Ovary (tissue), 10 donors: ENCODE measurements at regions of chr16 and their contacts with region 1.

Region 1: DNA sequence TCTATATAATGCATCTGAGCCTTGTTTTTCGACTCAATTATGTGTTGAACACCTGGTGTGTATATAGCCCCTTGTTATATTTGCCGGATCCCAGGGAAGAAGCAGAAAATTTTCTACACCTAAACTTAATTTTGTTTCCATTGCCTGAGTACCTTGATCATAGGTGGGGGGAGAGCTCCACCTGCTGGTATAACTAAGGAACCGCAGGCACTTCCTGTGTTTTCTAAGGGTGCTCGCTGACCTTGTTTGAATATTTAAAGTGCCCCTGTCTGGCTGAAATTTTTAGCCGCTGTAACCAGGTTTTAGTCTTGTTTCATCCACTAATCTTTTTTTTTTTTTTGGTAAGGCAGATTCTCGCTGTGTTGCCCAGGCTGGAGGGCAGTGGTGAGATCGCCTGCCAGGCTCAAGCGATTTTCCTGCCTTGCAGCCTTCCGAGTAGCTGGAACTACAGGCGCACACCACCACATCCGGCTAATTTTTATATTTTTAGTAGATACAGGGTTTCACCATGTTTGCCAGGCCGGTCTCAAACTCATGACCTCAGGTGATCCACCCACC is 6.5 kb upstream of the NUBP1 start:
- DNase-seq: peak; percentile 60 to 78 (median 63)
- H3K4me3 ChIP-seq: no peak overlapping the region
- H3K27ac ChIP-seq: peak overlapping the region in 1 of 2 donors; percentile 5
- H3K4me1 ChIP-seq: peaks cover 1% of the 10 kb centered on the region
- H3K27me3 ChIP-seq: no peaks in the 10 kb centered on the region
- CTCF ChIP-seq: peak; percentile 86 to 92 (median 92)
- EP300 ChIP-seq: no peak
- POLR2A ChIP-seq: no peak

Region 2: DNA sequence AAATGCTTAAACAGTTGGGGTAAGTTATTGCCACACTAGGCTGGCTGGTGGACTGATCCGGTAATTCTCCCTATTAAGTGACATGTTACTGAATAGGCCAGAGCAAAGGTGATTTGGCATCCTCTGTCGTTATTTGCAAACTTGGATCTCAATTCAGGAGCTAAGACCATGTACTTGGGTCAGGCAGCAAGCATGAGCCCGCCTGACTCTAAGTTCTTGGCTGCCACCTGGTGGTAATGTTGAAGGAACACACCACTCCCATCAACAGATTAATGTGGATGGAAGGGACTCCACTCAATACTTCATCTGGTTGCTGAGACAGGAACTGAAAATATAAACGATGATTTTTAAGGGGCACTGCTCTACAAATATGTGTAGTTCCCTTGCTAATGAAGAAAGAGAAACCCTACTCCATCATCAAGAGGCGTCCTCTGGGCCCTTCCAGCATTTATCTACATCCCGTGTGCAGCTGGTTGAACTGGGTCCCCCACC is 227.6 kb before region 1 on chr16:
- intact Hi-C with region 1: loop called in 2 of 4 experiments (anchors 2 to 5 kb)
- DNase-seq: peak in 4 of 5 donors; percentile 49 to 60 (median 54)
- H3K4me3 ChIP-seq: no peak overlapping the region
- H3K27ac ChIP-seq: no peak overlapping the region
- H3K4me1 ChIP-seq: no peaks in the 10 kb centered on the region
- H3K27me3 ChIP-seq: no peaks in the 10 kb centered on the region
- CTCF ChIP-seq: peak; percentile 64 to 76 (median 65)
- EP300 ChIP-seq: no peak
- POLR2A ChIP-seq: no peak

Region 3: GRCh38 chr16:10521681-10522274 is 215.4 kb before region 1 on chr16:
- intact Hi-C with region 1: loop called in 3 of 4 experiments (anchors 2 to 5 kb)
- DNase-seq: peak in 4 of 5 donors; percentile 47 to 74 (median 63)
- H3K4me3 ChIP-seq: no peak overlapping the region
- H3K27ac ChIP-seq: no peak overlapping the region
- H3K4me1 ChIP-seq: peaks cover 1% of the 10 kb centered on the region
- H3K27me3 ChIP-seq: no peaks in the 10 kb centered on the region
- CTCF ChIP-seq: peak in 2 of 3 donors; percentile 70 to 73
- EP300 ChIP-seq: no peak
- POLR2A ChIP-seq: no peak

Region 4: DNA sequence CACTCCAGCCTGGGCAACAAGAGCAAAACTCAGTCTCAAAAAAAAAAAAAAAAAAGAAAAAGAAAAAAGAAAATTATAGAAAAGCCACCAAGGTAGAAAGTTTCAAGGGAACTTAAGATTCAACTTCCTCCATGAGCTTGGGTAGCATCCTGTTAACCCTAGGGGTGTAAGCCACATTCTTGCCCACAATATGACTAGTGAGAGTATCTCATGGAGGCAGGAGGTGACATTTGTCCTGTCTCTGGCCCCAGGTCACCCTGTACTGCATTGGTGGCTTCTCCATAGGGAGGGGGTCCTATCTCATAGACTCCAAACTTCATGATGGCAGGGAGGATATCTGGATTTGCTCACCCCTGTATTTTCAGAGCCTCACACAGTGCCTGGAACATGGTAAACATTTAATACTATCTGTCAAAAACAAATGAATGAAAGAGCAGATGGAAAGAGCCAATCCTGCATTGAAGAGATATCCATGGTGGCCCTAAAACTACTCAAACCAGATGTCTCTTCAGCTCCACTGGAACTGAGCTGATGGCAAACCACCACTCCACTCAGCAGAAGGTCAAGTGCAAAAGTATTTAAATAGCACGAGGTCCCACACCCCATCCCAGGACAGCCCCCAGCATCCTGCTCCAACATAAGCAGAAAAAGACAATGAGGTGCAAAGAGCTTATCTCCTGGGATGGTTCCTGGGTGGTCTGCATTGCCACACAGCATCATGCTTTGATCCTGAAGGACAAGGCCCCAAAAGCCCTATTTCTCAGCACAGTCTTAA is 207.1 kb before region 1 on chr16:
- intact Hi-C with region 1: loop called in 1 of 4 experiments (anchors 5 kb)
- DNase-seq: no peak
- H3K4me3 ChIP-seq: no peak overlapping the region
- H3K27ac ChIP-seq: no peak overlapping the region
- H3K4me1 ChIP-seq: no peaks in the 10 kb centered on the region
- H3K27me3 ChIP-seq: no peaks in the 10 kb centered on the region
- CTCF ChIP-seq: no peak
- EP300 ChIP-seq: no peak
- POLR2A ChIP-seq: no peak

Region 5: DNA sequence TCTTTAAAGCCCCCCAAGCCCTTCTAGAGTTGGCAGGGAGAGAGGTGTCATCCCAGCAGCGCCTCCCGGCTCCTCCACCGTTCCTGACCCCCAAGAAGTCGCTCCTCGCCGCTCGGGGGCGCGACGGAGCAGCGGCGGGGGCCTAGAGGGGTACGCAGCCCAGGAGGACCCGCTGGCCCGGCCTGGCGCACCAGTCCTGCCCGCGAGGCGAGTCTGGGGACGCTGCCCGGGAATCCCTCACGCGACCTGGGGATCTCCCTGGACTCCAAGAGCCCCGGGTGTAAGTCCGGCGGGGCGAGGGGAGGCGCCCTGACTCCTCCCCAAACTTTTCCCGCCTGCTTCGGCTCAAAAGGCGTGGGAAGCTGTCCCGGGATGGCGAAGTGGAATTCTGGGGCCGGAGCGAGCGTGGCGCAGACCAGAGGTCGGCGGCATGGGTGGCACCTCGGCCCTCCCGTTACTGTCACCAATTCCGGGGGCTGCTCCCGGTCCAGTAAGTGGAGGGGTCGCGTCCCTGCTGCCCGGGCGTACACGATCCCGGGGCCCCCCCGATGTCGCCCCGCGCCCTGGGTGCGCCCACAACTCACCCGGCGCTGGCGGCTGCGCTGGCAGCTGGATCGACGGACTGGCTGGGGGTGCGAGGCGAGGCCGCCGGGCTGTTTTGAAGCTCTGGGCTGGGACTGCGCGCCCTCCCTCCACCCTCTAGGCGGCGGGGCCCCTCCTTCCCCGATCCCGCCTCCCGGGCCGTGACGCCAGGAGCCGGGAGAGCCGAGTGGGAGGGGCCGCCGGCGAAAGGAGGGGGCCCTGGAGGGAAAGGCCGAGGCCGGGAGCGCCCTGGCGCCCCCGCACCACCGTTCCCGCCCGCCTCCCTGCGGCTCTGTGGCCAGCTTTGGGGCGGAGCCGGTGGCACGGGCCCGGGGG is 156.9 kb before region 1 on chr16 and contains the start of gene EMP2:
- intact Hi-C with region 1: loop called in 1 of 4 experiments (anchors 5 kb)
- DNase-seq: peak; percentile 88 to 92 (median 91)
- H3K4me3 ChIP-seq: peak within 1 kb of the TSS; percentile 84
- H3K27ac ChIP-seq: peak within 1 kb of the TSS; percentile 94 to 99
- H3K4me1 ChIP-seq: peaks cover 24% of the 10 kb centered on the region
- H3K27me3 ChIP-seq: no peaks in the 10 kb centered on the region
- CTCF ChIP-seq: peak; percentile 50 to 83 (median 83)
- EP300 ChIP-seq: no peak
- POLR2A ChIP-seq: peak; percentile 86
- total RNA-seq, gene EMP2: 38.9 to 97.7 (median 83.0) TPM

Region 6: GRCh38 chr16:11056090-11056992 is 319.2 kb after region 1 on chr16:
- intact Hi-C with region 1: no loop called
- DNase-seq: peak in 1 of 5 donors; percentile 13
- H3K4me3 ChIP-seq: no peak overlapping the region
- H3K27ac ChIP-seq: peak overlapping the region in 1 of 2 donors; percentile 31
- H3K4me1 ChIP-seq: peaks cover 10% of the 10 kb centered on the region
- H3K27me3 ChIP-seq: no peaks in the 10 kb centered on the region
- CTCF ChIP-seq: no peak
- EP300 ChIP-seq: no peak
- POLR2A ChIP-seq: no peak

Region 7: DNA sequence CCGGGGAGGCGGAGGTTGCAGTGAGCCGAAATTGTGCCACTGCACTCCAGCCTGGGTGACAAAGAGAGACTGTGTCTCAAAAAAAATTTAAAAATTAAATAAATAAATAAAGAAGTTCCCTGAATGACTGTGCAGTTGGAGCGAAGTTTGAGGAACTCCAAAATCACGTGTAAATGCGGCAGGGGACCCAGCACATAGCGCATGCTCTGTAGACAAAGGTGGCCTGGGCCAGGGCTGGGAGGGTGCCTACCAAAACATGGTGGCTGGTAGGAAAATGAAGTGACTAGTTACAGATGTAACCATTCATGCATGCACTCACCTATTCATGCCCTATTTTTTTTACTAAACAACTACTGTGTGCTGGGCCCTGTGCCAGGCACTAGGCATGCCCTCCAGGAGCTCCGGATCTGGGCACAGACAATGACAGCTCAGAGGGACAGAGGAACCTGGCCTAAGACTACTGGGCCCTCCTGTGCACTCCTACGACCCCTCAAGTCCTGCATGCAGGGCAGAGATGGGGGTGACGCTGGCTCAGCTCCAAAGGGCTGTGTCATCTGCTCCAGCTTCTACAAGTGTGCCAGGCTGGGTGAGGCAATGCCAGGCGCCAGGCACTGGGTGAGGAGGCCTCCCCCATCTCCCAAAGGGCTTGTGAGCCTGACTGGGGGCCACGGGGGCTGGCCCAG is 673.4 kb after region 1 on chr16:
- intact Hi-C with region 1: no loop called
- DNase-seq: no peak
- H3K4me3 ChIP-seq: no peak overlapping the region
- H3K27ac ChIP-seq: no peak overlapping the region
- H3K4me1 ChIP-seq: peaks cover 1% of the 10 kb centered on the region
- H3K27me3 ChIP-seq: no peaks in the 10 kb centered on the region
- CTCF ChIP-seq: no peak
- EP300 ChIP-seq: no peak
- POLR2A ChIP-seq: no peak